ENCODE measurements at regions of chr1 and their contacts with region 1.

Region 1: DNA sequence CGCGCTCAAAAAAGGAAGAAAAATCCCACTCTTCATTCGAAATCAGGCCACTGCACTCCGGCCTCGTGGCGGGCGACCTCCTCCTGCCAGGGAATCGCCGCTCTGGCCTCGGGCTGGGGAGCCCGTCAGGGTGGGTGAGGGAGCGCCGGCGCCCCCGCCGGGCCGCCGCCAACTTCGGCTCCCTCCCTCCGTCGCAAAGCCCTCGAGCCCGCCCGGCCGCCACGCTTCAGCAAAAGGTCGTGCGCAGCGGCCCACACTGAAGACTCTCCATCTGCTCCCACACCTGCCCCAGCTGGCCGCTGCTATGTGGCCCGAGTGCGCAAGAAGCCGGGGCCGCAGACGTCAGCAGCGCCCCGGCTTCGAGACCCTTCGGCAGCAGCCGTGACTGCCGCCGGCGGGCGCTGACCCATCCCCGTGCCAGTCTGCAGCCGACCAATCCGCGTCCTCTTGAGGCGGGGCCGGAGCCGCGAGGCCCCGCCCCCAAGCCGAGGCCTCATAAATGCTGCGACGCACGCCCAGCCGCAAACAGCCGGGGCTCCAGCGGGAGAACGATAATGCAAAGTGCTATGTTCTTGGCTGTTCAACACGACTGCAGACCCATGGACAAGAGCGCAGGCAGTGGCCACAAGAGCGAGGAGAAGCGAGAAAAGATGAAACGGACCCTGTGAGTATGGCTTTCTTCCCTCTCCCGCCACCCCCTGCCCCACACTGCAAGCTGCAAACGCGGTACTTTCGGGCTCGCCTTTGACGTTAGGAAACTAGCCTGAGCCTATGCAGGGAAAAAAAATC is at the start of gene RGS2:
- DNase-seq: peak; percentile 95
- ATAC-seq: peak; percentile 98
- total RNA-seq, gene RGS2: 17.1 TPM

Region 2: GRCh38 chr1:192489748-192490147 is 319.0 kb before region 1 on chr1:
- intact Hi-C with region 1: loop called (anchors 5 kb)
- DNase-seq: peak; percentile 58
- ATAC-seq: peak; percentile 89

Region 3: DNA sequence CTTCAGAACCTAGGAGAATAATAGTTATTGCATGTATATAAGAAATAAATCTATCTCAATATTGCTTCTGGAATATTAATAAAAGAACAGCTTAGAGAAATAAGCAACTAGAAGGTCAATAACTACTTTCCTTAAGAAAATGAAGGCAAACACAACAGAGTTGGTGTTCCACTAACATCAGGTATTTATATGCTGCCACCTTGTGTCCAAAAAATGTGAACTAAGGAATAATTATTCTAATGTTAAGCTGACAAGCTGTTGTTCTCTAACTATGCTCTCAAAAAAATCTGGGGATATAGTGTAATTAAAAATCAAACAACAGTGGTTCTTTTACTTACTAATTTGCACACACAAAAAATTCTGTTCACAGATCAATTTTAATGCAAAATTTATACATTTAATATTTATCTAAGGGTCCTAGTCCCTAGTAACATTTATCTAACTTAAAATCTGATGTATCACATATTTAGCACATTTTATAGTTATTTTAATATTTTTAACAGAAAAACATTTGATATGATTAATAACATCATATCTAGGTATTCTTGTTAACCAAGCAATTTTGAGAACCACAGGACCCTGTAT is 210.8 kb after region 1 on chr1:
- intact Hi-C with region 1: loop called (anchors 5 kb)
- DNase-seq: no peak
- ATAC-seq: peak; percentile 51

Region 4: GRCh38 chr1:193121616-193122593 is 313.2 kb after region 1 on chr1 and contains the start of gene CDC73:
- intact Hi-C with region 1: loop called (anchors 10 kb)
- DNase-seq: peak; percentile 99
- ATAC-seq: peak; percentile 98
- total RNA-seq, gene CDC73: 59.5 TPM

Region 5: DNA sequence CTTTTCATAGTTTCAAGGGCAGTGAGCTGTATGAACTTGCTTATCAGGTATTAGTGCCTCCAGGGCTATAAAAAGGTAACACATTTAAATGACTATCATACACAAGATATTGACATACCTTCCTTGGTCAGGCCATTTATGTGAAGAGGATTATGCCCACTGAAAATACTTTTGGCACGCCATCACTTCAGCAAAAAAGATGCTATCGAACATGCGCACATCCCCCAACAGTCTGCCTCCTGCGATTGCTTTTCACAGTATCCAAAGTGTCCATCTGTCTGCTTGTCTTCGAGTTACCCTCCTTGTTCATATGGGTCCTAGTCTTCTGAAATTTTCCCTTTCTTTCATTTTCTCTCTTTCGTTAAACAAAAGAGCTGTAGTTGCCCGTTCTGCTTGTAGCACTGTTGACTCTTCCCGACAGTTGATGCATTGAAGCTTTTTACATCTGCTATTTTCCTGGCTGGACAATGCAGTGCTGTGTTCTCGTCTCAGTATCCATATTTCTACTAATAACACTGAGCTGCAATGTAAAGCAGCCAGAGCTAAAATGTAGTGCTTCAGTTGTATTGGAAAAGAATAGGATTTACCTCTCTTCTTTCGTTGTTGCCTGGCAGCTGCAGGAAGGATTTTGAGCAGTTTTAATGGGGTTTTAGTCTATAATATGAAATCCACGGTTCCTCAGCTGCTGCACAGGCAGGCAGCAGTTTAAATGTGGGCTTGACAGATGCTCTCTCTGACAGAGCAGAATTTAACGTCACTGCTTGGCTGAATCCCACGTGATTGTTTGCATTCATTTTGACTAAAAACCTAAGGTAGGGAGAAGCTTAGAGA is 377.4 kb after region 1 on chr1 and contains the start of gene B3GALT2:
- intact Hi-C with region 1: no loop called
- DNase-seq: no peak
- ATAC-seq: peak; percentile 73
- total RNA-seq, gene B3GALT2: 83.4 TPM

Measured in left ventricle myocardium superior (tissue), 1 donor.